ENCODE measurements at regions of chr10 and their contacts with region 1.

Region 1: DNA sequence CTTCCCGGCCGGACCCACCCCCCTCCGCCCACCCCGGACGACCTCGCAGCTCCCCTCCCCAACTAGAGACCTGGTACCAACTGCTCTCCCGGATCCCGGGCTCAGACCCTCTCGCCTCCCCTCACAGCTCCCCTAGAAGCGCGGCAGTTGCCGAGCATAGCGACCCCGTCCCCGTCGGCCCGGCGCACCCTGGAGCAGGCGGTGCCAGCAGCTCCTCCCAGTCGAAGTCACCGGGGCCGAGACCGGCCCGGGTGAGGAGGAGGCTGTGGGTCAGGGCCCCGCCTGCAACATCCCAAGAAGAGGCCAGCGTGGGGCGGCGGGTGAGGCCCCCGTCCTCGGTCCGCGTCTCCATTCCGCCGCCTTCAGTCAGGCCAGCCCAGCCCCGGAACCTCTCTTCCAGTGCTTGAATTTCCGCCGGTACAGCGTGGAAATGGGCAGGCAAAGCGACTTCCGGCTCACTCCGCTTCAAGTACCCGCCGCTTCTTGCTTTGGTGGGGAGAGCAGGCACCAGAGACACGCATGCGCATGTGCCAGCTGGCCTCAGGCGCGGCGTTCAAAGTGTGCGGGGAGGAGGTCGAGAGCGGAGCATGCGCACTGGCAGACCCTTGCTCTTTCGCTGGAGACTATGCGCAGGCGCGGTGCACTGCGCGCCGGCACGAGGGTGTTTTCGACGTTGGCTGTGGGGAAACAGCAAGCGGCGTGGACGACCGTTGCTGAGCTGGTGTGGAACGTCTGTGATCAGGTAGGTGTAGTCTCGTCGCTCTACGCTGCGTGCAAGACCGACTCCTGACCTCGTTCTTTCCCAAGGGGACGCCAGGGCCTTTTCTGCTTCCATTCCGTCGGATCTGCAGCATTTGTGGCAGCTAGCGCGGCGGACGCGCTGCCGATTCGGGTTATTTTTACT is at the start of gene C10orf88:
- DNase-seq: peak; percentile 96
- ATAC-seq: peak; percentile 100
- H3K4me3 ChIP-seq: peak within 1 kb of the TSS; percentile 80
- H3K27ac ChIP-seq: peak within 1 kb of the TSS; percentile 65
- H3K4me1 ChIP-seq: peaks cover 5% of the 10 kb centered on the region
- H3K27me3 ChIP-seq: no peaks in the 10 kb centered on the region
- CTCF ChIP-seq: no peak
- EP300 ChIP-seq: no peak
- POLR2A ChIP-seq: peak; percentile 89
- RAD21 ChIP-seq: no peak
- polyA plus RNA-seq, gene C10orf88: 4.7 to 4.8 TPM

Region 2: GRCh38 chr10:122646511-122647382 is 307.3 kb before region 1 on chr10:
- CTCF ChIA-PET with region 1: no interaction called
- POLR2A ChIA-PET with region 1: no interaction called
- RAD21 ChIA-PET with region 1: no interaction called
- SMC1A ChIA-PET with region 1: no interaction called
- in situ Hi-C with region 1: no loop called
- intact Hi-C with region 1: no loop called
- DNase-seq: no peak
- ATAC-seq: no peak
- H3K4me3 ChIP-seq: no peak overlapping the region
- H3K27ac ChIP-seq: no peak overlapping the region
- H3K4me1 ChIP-seq: no peaks in the 10 kb centered on the region
- H3K27me3 ChIP-seq: no peaks in the 10 kb centered on the region; a peak in 1 of 4 replicates
- CTCF ChIP-seq: no peak
- EP300 ChIP-seq: no peak
- POLR2A ChIP-seq: no peak
- RAD21 ChIP-seq: no peak

Region 3: GRCh38 chr10:122854648-122855047 is 99.4 kb before region 1 on chr10:
- CTCF ChIA-PET with region 1: no interaction called
- POLR2A ChIA-PET with region 1: no interaction called
- RAD21 ChIA-PET with region 1: no interaction called
- SMC1A ChIA-PET with region 1: no interaction called
- in situ Hi-C with region 1: no loop called
- intact Hi-C with region 1: no loop called
- DNase-seq: no peak
- ATAC-seq: no peak
- H3K4me3 ChIP-seq: no peak overlapping the region
- H3K27ac ChIP-seq: no peak overlapping the region
- H3K4me1 ChIP-seq: no peaks in the 10 kb centered on the region; the same call in 1 of the 2 replicates
- H3K27me3 ChIP-seq: no peaks in the 10 kb centered on the region
- CTCF ChIP-seq: no peak
- EP300 ChIP-seq: no peak
- POLR2A ChIP-seq: no peak
- RAD21 ChIP-seq: no peak

Region 4: DNA sequence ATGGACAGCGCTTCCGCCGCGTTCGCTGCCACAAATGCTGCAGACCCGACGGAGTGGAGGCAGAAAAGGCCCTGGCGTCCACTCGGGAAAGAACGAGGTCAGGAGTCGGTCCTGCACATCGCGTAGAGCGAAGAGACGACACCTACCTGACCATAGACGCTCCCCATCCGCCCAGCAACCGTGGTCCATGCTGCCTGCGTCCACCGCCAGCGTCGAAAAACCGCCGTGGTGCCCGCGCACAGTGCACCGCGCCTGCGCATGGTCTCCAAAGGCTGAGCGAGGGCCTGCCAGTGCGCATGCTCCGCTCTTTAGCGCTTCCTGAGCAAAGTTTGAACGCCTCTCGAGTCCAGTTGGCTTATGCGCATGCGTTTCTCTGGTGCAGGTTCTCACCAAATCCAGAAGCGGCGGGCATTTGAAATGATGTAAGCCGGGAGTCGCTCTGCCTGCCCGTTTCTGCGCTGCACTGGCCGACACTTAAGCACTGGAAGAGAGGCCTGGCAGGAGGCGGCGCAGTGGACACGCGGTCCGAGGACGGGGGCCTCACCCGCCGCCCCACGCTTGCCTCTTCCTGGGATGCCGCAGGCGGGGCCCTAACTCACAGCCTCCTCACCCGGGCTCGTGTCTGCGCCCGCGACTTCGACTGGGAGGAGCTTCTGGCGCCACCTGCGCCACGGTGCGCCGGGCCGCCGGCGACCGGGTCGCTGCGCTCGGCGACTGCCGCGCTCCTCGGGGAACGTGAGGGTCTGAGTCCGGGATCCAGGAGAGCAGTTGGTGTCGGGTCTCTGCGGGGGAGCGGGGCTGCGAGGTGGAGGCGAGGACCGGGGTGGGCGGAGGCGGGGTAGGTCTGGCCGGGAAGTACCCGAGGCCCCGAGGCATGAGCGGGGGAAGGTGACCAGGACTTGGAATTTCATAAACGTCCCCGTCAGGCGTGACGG is 74.5 kb before region 1 on chr10 and contains the start of gene FAM24B:
- CTCF ChIA-PET with region 1: no interaction called
- POLR2A ChIA-PET with region 1: no interaction called
- RAD21 ChIA-PET with region 1: no interaction called
- SMC1A ChIA-PET with region 1: no interaction called
- in situ Hi-C with region 1: no loop called
- intact Hi-C with region 1: loop called (anchors 5 kb)
- DNase-seq: peak; percentile 92
- ATAC-seq: peak; percentile 89
- H3K4me3 ChIP-seq: peak within 1 kb of the TSS; percentile 82
- H3K27ac ChIP-seq: peak within 1 kb of the TSS; percentile 59
- H3K4me1 ChIP-seq: no peaks in the 10 kb centered on the region; the same call in 1 of the 2 replicates
- H3K27me3 ChIP-seq: no peaks in the 10 kb centered on the region
- CTCF ChIP-seq: no peak
- EP300 ChIP-seq: no peak
- POLR2A ChIP-seq: peak; percentile 75
- RAD21 ChIP-seq: no peak
- polyA plus RNA-seq, gene FAM24B: 13.3 to 15.3 TPM

Region 5: DNA sequence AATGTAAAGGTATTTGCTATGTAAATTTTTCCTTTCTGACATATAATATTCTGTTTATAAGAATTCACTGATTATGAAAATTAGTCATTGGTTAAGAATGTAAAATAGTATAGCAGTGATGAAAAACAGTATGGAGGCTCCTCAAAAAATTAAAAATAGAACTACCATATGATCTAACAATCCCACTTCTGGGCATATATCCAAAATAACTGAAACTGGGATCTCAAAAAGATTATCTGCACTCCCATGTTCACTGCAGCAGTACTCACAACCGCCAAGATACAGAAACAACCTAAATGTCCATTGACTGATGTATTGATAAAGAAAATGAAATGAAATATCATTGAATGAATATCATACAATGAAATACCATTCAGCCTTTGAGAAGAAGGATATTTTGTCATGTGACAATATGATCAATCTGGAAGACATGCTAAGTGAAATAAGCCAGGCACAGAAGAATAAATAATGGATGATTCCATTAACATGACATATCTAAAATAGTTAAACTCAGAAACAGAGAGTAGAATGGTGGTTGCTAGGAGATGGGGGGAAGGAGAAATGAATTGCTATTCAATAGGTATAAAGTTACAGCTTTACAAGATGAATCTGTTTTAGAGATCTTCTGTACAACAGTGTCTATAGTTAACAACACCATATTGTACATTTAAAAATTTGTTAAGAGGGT is 14.1 kb before region 1 on chr10:
- CTCF ChIA-PET with region 1: no interaction called
- POLR2A ChIA-PET with region 1: no interaction called
- RAD21 ChIA-PET with region 1: interaction called, 3 read pairs
- SMC1A ChIA-PET with region 1: interaction called, 11 read pairs
- in situ Hi-C with region 1: no loop called
- intact Hi-C with region 1: no loop called
- DNase-seq: no peak
- ATAC-seq: no peak
- H3K4me3 ChIP-seq: no peak overlapping the region
- H3K27ac ChIP-seq: no peak overlapping the region
- H3K4me1 ChIP-seq: no peaks in the 10 kb centered on the region
- H3K27me3 ChIP-seq: no peaks in the 10 kb centered on the region
- CTCF ChIP-seq: no peak
- EP300 ChIP-seq: no peak
- POLR2A ChIP-seq: no peak
- RAD21 ChIP-seq: no peak

Measured in GM12878 (cell line).